Activated CD8-positive, alpha-beta T cell treated with anti-CD3 and anti-CD28 coated beads, Interleukin-2, amount 10 ng/mL, durations not matched to agents 7 days and 5 days (primary cell): ENCODE measurements at regions of chr4 and their contacts with region 1.

Region 1: DNA sequence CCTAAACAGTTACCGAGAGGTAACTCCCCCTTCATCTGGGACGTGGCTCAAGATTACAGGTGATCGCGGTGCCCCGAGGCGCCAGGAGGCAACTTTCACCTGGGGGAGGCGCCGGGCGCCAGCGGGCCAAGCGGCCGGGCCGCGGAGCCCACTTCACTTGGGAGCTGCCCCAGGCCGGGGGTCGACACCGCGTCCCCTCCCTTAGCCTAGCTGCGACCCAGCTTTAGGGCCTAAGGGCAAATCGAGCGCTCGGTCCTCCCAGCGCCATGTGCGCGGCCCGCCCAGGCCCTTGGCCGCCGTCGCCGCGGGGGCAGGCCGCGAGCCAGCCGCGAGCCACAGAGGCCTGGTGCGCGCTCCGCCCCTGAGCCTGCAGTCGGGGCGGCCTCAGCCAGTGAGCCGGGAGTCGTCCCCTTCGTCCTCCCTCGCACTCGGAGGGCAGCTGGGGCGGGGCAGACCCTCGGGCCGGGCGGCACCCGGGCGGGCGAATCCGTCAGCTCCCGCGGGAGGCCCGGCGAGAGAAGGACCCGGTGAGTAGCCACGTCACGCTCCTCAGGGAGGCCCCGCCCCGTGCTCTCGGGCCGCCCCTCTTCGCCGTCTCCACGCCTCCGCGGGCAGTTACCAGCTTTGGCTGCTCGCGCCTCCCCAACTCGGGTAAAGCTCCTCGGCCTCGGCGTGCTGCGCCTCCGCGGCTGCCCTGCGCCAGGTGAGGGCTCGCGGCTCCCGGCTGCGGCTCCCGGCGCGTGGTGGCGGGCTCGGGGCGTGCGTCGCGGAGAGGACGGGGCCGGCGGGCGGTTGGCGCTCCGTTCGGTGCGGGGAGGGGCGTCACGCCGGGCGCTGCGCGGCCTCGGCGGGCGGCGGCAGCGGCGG is at the start of gene LARP1B:
- DNase-seq: peak; percentile 95
- ATAC-seq: peak; percentile 92
- H3K4me3 Mint-ChIP-seq: peak within 1 kb of the TSS; percentile 82
- H3K27ac Mint-ChIP-seq: peak within 1 kb of the TSS; percentile 89
- H3K4me1 Mint-ChIP-seq: peaks cover 21% of the 10 kb centered on the region
- H3K27me3 Mint-ChIP-seq: peaks cover 3% of the 10 kb centered on the region
- total RNA-seq, gene LARP1B: 13.6 to 14.5 TPM

Region 2: GRCh38 chr4:127880764-127881562 is 180.0 kb before region 1 on chr4 and contains the start of gene PLK4:
- CTCF ChIA-PET with region 1: no interaction called
- POLR2A ChIA-PET with region 1: interaction called, 14 read pairs
- DNase-seq: peak; percentile 97
- ATAC-seq: peak; percentile 92
- H3K4me3 Mint-ChIP-seq: peak within 1 kb of the TSS; percentile 90
- H3K27ac Mint-ChIP-seq: peak within 1 kb of the TSS; percentile 95
- H3K4me1 Mint-ChIP-seq: peaks cover 31% of the 10 kb centered on the region
- H3K27me3 Mint-ChIP-seq: no peaks in the 10 kb centered on the region
- total RNA-seq, gene PLK4: 62.1 to 65.9 TPM

Region 3: GRCh38 chr4:128295255-128295654 is 234.3 kb after region 1 on chr4:
- CTCF ChIA-PET with region 1: no interaction called
- POLR2A ChIA-PET with region 1: no interaction called
- DNase-seq: no peak
- ATAC-seq: no peak
- H3K4me3 Mint-ChIP-seq: no peak overlapping the region
- H3K27ac Mint-ChIP-seq: no peak overlapping the region
- H3K4me1 Mint-ChIP-seq: no peaks in the 10 kb centered on the region
- H3K27me3 Mint-ChIP-seq: no peaks in the 10 kb centered on the region